Activated CD4-positive, alpha-beta T cell treated with anti-CD3 and anti-CD28 coated beads for 36 hours (primary cell): ENCODE measurements at regions of chrX and their contacts with region 1.

Region 1: GRCh38 chrX:78375894-78376293 is 48.5 kb upstream of the CYSLTR1 start:
- DNase-seq: no peak
- ATAC-seq: peak; percentile 86
- H3K4me3 Mint-ChIP-seq: no peak overlapping the region
- H3K27ac Mint-ChIP-seq: no peak overlapping the region
- H3K4me1 Mint-ChIP-seq: peaks cover 17% of the 10 kb centered on the region
- H3K27me3 Mint-ChIP-seq: no peaks in the 10 kb centered on the region

Region 2: GRCh38 chrX:78333521-78333920 is 42.4 kb before region 1 on chrX:
- CTCF ChIA-PET with region 1: no interaction called
- POLR2A ChIA-PET with region 1: no interaction called
- intact Hi-C with region 1: loop called (anchors 5 kb)
- DNase-seq: no peak
- ATAC-seq: peak; percentile 40
- H3K4me3 Mint-ChIP-seq: no peak overlapping the region
- H3K27ac Mint-ChIP-seq: peak overlapping the region; percentile 42
- H3K4me1 Mint-ChIP-seq: peaks cover 61% of the 10 kb centered on the region
- H3K27me3 Mint-ChIP-seq: no peaks in the 10 kb centered on the region